Right cardiac atrium (tissue), 5 donors: ENCODE measurements at regions of chr2 and their contacts with region 1.

Region 1: DNA sequence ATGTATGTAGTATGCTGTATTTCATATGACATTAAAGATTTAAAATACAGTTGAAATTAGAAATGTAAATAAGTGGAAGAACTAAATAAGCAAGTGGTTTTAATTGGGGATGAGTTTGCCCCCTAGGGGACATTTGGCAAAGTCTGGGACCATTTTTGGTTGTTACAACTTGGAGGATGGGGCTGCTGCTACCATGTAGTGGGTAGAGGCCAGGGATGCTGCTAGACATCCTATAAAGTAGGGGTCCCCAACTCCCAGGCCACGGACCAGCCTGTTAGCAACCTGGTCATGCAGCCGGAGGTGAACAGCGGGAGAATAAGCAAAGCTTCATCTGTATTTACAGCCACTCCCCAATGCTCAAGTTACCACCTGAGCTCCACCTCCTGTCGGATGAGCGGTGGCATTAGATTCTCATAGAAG is 27.9 kb upstream of the ASNSD1 start:
- DNase-seq: no peak
- ATAC-seq: peak in 1 of 2 donors; percentile 31
- H3K4me3 ChIP-seq: no peak overlapping the region
- H3K27ac ChIP-seq: no peak overlapping the region
- H3K4me1 ChIP-seq: no peaks in the 10 kb centered on the region
- H3K27me3 ChIP-seq: no peaks in the 10 kb centered on the region

Region 2: DNA sequence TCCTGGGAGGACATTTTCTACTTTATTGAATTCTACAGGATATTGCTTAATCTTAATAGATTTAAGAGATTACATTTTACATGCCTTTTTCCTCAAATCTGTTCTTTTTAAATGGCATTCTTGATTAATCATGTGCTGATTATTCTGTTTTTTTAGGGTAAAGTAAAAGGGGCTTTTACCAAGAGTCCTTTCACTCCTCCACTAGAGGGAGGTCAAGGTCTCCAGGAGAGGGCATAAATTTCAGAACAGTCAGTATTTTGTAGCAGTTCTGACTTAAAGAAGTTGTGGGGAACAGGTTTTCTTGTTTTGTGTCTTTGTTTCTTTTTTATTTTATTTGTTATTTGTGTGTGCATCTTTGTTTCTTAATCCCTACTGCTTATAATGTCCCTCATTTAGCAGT is 166.7 kb before region 1 on chr2:
- intact Hi-C with region 1: loop called in 2 of 4 experiments (anchors 5 to 10 kb)
- DNase-seq: no peak
- ATAC-seq: peak in 1 of 2 donors; percentile 67
- H3K4me3 ChIP-seq: no peak overlapping the region
- H3K27ac ChIP-seq: no peak overlapping the region
- H3K4me1 ChIP-seq: no peaks in the 10 kb centered on the region
- H3K27me3 ChIP-seq: no peaks in the 10 kb centered on the region

Region 3: DNA sequence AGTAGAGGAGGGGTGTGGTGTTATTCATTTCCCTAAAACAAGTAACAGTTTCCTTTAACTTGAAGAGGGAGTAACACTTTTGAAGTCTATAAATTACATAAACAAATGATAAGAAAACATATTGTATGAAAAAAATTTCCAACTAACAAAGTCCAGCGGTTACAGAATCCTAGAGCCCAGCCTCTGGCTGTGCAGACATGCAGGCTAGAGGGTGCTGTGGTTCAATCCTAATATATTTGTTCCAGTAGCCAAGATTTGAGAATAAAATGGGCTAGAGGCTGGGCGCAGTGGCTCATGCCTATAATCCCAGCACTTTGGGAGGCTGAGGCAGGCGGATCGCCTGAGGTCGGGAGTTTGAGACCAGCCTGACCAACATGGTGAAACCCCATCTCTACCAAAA is 135.2 kb before region 1 on chr2:
- intact Hi-C with region 1: loop called in 1 of 4 experiments (anchors 10 kb)
- DNase-seq: no peak
- ATAC-seq: peak in 1 of 2 donors; percentile 64
- H3K4me3 ChIP-seq: no peak overlapping the region
- H3K27ac ChIP-seq: no peak overlapping the region
- H3K4me1 ChIP-seq: no peaks in the 10 kb centered on the region
- H3K27me3 ChIP-seq: no peaks in the 10 kb centered on the region

Region 4: DNA sequence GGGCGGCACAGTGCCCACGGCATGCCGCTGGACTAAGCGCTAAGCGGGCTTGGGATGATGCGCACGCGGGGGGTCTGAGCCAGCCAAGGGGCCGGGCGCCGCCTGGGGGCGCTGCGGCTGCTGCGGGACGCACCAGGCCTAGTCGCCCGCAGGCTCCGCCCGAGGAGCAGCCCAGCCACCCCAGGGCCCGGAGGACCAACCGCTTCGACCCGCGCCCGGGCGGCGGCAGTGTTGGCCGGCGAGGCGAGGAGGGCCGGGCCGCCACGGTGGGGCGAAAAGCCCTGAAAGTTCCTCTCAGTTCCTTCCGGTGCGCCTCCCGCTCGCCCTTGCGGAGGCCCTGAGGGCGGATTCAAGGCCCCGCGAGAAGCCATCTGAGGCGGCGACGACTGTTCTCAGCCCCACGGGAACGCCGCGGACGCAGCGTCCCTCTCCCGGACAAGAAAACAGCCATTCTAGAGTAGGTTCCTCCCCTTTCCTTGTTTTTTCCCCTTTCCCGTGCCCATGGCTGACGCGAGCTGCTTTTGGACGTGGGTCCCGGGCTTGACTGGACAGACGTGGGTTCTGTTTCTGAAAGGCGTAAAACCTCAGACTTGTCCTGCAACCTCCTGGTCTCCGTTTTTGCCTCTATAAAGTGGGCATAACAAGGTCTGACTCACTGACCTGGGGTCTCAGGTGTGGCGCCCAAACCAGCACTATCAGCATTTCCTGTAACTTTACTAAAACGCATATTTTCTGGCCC is 41.1 kb after region 1 on chr2 and contains the start of gene ANKAR:
- intact Hi-C with region 1: no loop called
- DNase-seq: peak; percentile 94 to 98 (median 97)
- ATAC-seq: peak; percentile 99 to 100
- H3K4me3 ChIP-seq: peak within 1 kb of the TSS; percentile 60
- H3K27ac ChIP-seq: peak within 1 kb of the TSS; percentile 80
- H3K4me1 ChIP-seq: no peaks in the 10 kb centered on the region
- H3K27me3 ChIP-seq: no peaks in the 10 kb centered on the region
- total RNA-seq, gene ANKAR: 9.2 to 12.0 (median 11.0) TPM